CD8-positive, alpha-beta T cell (primary cell): ENCODE measurements at regions of chr19 and their contacts with region 1.

Region 1: GRCh38 chr19:49877020-49877878 is at the starts of genes AKT1S1 and TBC1D17:
- DNase-seq: peak; percentile 96 to 100 (median 97)
- ATAC-seq: peak; percentile 60
- H3K4me3 ChIP-seq: peak within 1 kb of the TSS; percentile 88 to 97
- H3K4me3 Mint-ChIP-seq: no peak within 1 kb of the TSS
- H3K27ac ChIP-seq: peak within 1 kb of the TSS; percentile 97 to 98
- H3K27ac Mint-ChIP-seq: no peak within 1 kb of the TSS
- H3K4me1 ChIP-seq: peaks cover 22% of the 10 kb centered on the region
- H3K4me1 Mint-ChIP-seq: peaks cover 29% of the 10 kb centered on the region
- H3K27me3 ChIP-seq: no peaks in the 10 kb centered on the region
- H3K27me3 Mint-ChIP-seq: no peaks in the 10 kb centered on the region
- CTCF ChIP-seq: no peak
- total RNA-seq, gene AKT1S1: 12.6 to 14.1 TPM
- total RNA-seq, gene TBC1D17: 31.1 to 31.2 TPM

Region 2: DNA sequence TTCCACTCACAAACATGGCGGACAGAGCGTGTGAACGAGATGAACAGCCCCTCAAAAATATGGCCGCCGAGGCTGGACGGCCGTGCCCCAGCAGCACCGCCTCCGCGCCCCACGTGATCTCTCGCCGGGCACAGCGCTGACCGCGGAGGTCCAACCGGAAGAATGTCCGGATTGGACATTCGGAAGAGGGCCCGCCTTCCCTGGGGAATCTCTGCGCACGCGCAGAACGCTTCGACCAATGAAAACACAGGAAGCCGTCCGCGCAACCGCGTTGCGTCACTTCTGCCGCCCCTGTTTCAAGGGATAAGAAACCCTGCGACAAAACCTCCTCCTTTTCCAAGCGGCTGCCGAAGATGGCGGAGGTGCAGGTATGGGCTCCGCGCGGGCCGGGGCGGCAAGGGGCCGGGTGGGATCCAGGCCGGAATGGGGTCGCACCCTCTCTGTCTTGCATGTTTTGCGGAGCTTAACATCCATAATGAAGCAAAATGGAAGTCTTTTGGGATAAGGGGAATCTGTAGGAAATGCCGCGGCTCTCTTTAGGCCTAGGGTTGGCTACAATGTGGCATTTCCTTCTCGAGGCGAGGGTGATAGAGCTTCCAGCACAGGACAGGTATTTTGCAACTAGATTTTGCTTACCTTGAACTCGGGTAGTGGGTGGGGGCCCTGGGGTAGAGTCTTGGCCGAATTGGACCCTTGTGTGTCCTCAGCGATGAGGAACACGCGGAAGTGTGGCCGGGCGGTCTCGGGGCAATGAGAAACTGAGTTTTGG is 389.8 kb before region 1 on chr19 and contains the start of gene RPL13A:
- CTCF ChIA-PET with region 1: no interaction called
- POLR2A ChIA-PET with region 1: no interaction called
- intact Hi-C with region 1: loop called in 1 of 2 experiments (anchors 2 kb)
- DNase-seq: peak; percentile 99 to 100 (median 99)
- ATAC-seq: peak; percentile 85
- H3K4me3 ChIP-seq: peak within 1 kb of the TSS; percentile 93 to 96
- H3K4me3 Mint-ChIP-seq: peak within 1 kb of the TSS; percentile 97
- H3K27ac ChIP-seq: peak within 1 kb of the TSS; percentile 91
- H3K27ac Mint-ChIP-seq: peak within 1 kb of the TSS; percentile 92
- H3K4me1 ChIP-seq: peaks cover 39% of the 10 kb centered on the region
- H3K4me1 Mint-ChIP-seq: peaks cover 50% of the 10 kb centered on the region
- H3K27me3 ChIP-seq: no peaks in the 10 kb centered on the region
- H3K27me3 Mint-ChIP-seq: no peaks in the 10 kb centered on the region
- CTCF ChIP-seq: no peak
- total RNA-seq, gene RPL13A: 5,165 to 5,323 TPM

Region 3: GRCh38 chr19:49665351-49666119 is 211.7 kb before region 1 on chr19 and contains the starts of genes BCL2L12 and IRF3:
- CTCF ChIA-PET with region 1: no interaction called
- POLR2A ChIA-PET with region 1: no interaction called
- intact Hi-C with region 1: loop called in 1 of 2 experiments (anchors 1 kb)
- DNase-seq: peak; percentile 98 to 100 (median 99)
- ATAC-seq: peak; percentile 80
- H3K4me3 ChIP-seq: peak within 1 kb of the TSS; percentile 86 to 95
- H3K4me3 Mint-ChIP-seq: peak within 1 kb of the TSS; percentile 99
- H3K27ac ChIP-seq: peak within 1 kb of the TSS; percentile 77 to 93
- H3K27ac Mint-ChIP-seq: peak within 1 kb of the TSS; percentile 99
- H3K4me1 ChIP-seq: peaks cover 29% of the 10 kb centered on the region
- H3K4me1 Mint-ChIP-seq: peaks cover 38% of the 10 kb centered on the region
- H3K27me3 ChIP-seq: no peaks in the 10 kb centered on the region
- H3K27me3 Mint-ChIP-seq: no peaks in the 10 kb centered on the region
- CTCF ChIP-seq: no peak
- total RNA-seq, gene BCL2L12: 13.1 to 14.7 TPM
- total RNA-seq, gene IRF3: 92.0 to 99.5 TPM

Region 4: GRCh38 chr19:49817964-49818648 is 59.1 kb before region 1 on chr19 and contains the start of gene MED25:
- CTCF ChIA-PET with region 1: no interaction called
- POLR2A ChIA-PET with region 1: interaction called, 12 read pairs
- intact Hi-C with region 1: loop called (anchors 1 kb)
- DNase-seq: peak; percentile 78 to 94 (median 87)
- ATAC-seq: peak; percentile 64
- H3K4me3 ChIP-seq: peak within 1 kb of the TSS; percentile 85 to 91
- H3K4me3 Mint-ChIP-seq: peak within 1 kb of the TSS; percentile 99
- H3K27ac ChIP-seq: peak within 1 kb of the TSS; percentile 95 to 98
- H3K27ac Mint-ChIP-seq: peak within 1 kb of the TSS; percentile 100
- H3K4me1 ChIP-seq: peaks cover 13% of the 10 kb centered on the region
- H3K4me1 Mint-ChIP-seq: peaks cover 30% of the 10 kb centered on the region
- H3K27me3 ChIP-seq: no peaks in the 10 kb centered on the region
- H3K27me3 Mint-ChIP-seq: no peaks in the 10 kb centered on the region
- CTCF ChIP-seq: peak; percentile 19
- total RNA-seq, gene MED25: 41.9 to 42.1 TPM

Region 5: DNA sequence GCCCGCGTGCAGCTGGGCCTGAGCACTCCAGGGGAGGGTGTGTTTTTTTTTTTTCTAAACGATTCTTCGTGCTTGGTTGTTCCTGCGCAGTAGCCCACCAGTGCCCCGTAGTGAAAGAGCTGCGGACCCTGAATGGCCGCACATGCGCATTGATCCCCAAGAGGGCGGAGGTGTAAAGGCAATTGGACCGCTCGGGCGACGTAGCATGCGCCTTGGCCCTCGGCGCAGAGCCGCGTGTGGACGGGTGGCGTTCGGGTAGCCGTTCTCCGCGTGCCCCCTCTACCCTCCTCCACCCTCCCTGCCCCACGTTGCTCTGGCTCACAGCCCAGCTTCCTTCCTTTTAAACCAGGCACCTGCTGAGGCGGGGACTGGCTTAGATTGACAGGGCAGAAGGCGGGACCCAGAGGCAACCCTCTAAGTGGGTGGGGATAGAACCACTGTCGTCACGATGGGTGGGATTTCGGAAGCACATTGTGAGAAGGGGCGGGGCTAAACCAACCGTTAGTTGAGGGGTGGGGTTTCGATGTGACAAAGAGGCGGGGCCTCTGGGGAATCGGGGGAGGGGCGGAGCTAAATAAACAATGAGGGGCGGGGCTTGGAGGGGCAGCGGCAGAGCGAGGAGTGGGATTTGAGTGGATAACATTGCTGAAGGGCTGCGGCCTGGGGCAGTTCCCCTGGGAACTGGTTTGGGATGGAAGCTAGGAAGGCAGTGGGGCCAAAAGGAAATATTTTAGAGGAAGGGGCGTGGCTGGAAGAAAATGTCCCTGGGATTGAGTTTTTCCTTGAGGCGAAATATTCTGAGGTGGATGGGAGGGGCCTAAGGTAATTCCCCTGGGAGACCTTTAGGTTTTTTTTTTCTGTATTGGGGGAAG is 52.6 kb after region 1 on chr19:
- CTCF ChIA-PET with region 1: no interaction called
- POLR2A ChIA-PET with region 1: interaction called, 18 read pairs
- intact Hi-C with region 1: loop called (anchors 1 kb)
- DNase-seq: peak; percentile 83 to 98 (median 91)
- ATAC-seq: peak; percentile 89
- H3K4me3 ChIP-seq: peak overlapping the region; percentile 90 to 100
- H3K4me3 Mint-ChIP-seq: peak overlapping the region; percentile 98
- H3K27ac ChIP-seq: peak overlapping the region; percentile 83 to 97
- H3K27ac Mint-ChIP-seq: peak overlapping the region; percentile 96
- H3K4me1 ChIP-seq: peaks cover 35% of the 10 kb centered on the region
- H3K4me1 Mint-ChIP-seq: peaks cover 65% of the 10 kb centered on the region
- H3K27me3 ChIP-seq: no peaks in the 10 kb centered on the region
- H3K27me3 Mint-ChIP-seq: no peaks in the 10 kb centered on the region
- CTCF ChIP-seq: no peak